AG04450 (cell line): ENCODE measurements at regions of chr7 and their contacts with region 1.

Region 1: DNA sequence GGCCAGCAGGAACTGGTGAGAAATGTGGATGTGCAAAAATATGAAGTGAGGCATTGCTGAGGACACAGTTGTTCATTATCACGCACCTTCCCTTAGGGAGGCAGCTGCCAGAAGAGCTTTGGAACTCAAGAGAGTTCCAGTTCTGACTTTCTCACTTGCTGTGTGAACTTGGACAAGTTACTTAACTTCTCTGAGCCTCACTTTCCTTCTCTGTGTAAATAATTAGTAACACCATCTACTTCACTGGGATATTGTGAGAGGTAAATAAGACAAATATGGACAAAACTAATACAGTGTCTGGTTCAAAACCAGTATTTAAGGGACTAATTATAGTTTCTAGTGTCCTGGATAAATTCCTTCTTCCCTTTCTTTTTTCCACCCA is 6.3 kb upstream of the SLC13A4 start:
- DNase-seq: no peak
- H3K4me3 ChIP-seq: no peak overlapping the region
- H3K27ac ChIP-seq: no peak overlapping the region
- H3K27me3 ChIP-seq: no peaks in the 10 kb centered on the region
- CTCF ChIP-seq: no peak

Region 2: GRCh38 chr7:135385209-135385608 is 349.1 kb before region 1 on chr7:
- CTCF ChIA-PET with region 1: no interaction called
- POLR2A ChIA-PET with region 1: no interaction called
- DNase-seq: no peak
- H3K4me3 ChIP-seq: no peak overlapping the region
- H3K27ac ChIP-seq: no peak overlapping the region
- H3K27me3 ChIP-seq: no peaks in the 10 kb centered on the region
- CTCF ChIP-seq: no peak

Region 3: GRCh38 chr7:135522509-135522908 is 211.8 kb before region 1 on chr7:
- CTCF ChIA-PET with region 1: no interaction called
- POLR2A ChIA-PET with region 1: no interaction called
- DNase-seq: no peak
- H3K4me3 ChIP-seq: no peak overlapping the region
- H3K27ac ChIP-seq: no peak overlapping the region
- H3K27me3 ChIP-seq: no peaks in the 10 kb centered on the region
- CTCF ChIP-seq: no peak

Region 4: DNA sequence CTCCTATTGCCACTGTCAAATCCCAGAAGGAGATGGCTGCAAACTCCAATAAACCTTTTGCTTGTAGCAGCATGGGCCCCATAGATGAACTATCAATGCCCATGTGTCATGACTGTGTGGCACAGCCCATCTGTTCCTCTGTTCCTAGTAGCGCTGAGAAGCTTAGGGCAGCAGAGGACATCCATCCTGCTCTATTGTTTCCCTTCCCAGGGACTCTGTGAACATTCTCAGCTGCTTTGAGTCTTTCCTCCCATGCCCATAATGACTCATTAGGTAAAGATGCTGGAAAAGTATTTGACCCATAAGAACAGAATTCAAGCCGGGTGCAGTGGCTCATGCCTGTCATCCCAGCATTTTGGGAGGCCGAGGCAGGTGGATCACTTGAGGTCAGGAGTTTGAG is 43.7 kb before region 1 on chr7:
- CTCF ChIA-PET with region 1: no interaction called
- POLR2A ChIA-PET with region 1: interaction called, 10 read pairs
- DNase-seq: peak; percentile 23
- H3K4me3 ChIP-seq: no peak overlapping the region
- H3K27ac ChIP-seq: no peak overlapping the region
- H3K27me3 ChIP-seq: no peaks in the 10 kb centered on the region
- CTCF ChIP-seq: no peak

Region 5: DNA sequence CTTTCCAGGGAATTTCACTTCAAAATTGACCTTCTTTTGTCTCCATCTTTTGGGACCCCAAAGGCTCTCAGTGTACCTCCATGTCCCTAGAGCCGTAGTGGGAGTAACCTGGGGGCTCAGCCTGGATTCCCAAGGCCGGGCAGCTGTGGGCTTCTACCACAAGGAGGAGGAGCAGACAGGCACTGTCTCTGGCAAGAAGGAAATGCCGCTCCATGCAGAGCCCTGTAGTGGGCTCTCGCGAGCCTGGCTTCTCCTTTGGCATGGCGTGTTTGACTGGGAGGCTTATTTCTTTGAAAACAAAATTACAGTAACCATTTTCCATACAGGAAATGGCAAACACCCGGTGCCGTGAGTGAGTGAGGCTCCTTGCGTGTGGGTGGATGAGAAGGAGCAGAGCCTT is 91.1 kb after region 1 on chr7:
- CTCF ChIA-PET with region 1: no interaction called
- POLR2A ChIA-PET with region 1: no interaction called
- DNase-seq: no peak
- H3K4me3 ChIP-seq: no peak overlapping the region
- H3K27ac ChIP-seq: no peak overlapping the region
- H3K27me3 ChIP-seq: peaks cover 13% of the 10 kb centered on the region
- CTCF ChIP-seq: no peak